ENCODE measurements at regions of chr14 and their contacts with region 1.

Region 1: DNA sequence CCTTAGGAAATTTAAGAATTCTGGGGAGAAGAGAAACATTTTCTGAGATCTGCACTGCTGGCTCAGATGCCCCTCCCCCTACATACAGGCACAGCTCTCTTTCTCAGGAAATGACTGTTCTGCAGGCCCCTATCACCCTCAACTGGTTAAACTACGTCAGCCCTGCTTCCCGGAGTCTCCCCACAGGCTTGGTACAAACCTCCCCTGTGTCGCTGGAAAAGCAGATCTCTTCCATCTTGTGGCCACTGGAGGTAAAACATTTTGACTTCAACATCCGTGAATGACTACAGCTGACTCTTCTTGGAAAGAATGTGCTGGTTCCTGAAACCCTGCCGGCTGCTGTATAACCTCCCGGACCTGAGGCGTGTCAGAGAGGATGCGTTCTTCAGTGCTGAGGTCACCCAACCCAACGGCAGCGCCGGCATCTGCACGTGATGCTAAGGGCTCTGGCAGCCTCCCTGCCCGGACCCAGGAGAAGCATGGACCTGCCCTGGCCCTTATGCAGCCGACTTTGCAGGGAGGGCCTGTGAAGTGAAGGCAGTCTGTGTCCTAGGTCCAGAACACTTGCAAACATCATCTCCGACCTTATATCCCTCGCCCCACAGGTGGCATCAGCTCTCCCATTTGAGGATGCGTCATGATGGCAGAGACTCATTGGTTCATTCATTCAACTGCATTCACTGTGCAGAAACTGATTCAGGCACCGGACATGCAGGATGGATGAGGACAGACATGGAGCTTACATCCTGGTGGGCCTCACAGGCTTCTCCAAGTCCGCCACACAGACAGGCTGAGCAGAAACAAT is 129.3 kb downstream of the GCH1 start:
- DNase-seq: peak; percentile 67 to 83
- H3K4me3 ChIP-seq: no peak overlapping the region
- H3K27ac ChIP-seq: no peak overlapping the region
- H3K4me1 ChIP-seq: peaks cover 0 to 11% (median 2%) of the 10 kb centered on the region in 4 experiments; a peak in 4 of 7 replicates
- H3K27me3 ChIP-seq: no peaks in the 10 kb centered on the region
- CTCF ChIP-seq: peak; percentile 40 to 74 (median 70)
- EP300 ChIP-seq: peak in 1 of 2 experiments; percentile 10; a peak in 1 of 3 replicates
- POLR2A ChIP-seq: no peak
- RAD21 ChIP-seq: peak; percentile 71 to 75

Region 2: DNA sequence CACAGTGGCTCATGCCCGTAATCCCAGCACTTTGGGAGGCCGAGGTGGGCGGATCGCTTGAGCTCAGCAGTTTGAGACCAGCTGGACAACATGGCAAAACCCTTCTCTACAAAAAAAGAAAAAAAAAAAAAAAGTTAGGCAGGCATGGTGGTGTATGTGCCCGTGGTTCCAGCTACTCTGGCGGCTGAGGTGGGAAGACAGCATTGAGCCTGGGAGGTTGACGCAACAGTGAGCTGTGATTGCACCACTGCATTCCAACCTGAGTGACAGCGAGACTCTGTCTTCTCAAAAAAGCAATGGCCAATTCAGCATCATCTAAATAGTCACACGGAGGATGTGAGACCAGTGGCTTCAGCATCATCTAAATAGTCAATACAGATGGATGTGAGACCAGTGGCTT is 216.8 kb before region 1 on chr14:
- CTCF ChIA-PET with region 1: interaction called, 98 read pairs
- POLR2A ChIA-PET with region 1: no interaction called
- DNase-seq: no peak
- H3K4me3 ChIP-seq: no peak overlapping the region
- H3K27ac ChIP-seq: no peak overlapping the region
- H3K4me1 ChIP-seq: peaks cover 0 to 2% (median 0%) of the 10 kb centered on the region in 4 experiments; a peak in 1 of 7 replicates
- H3K27me3 ChIP-seq: no peaks in the 10 kb centered on the region
- CTCF ChIP-seq: no peak
- EP300 ChIP-seq: no peak
- POLR2A ChIP-seq: no peak
- RAD21 ChIP-seq: no peak

Region 3: GRCh38 chr14:54577977-54578376 is 195.4 kb before region 1 on chr14:
- CTCF ChIA-PET with region 1: interaction called, 35 read pairs
- POLR2A ChIA-PET with region 1: interaction called, 3 read pairs
- DNase-seq: no peak
- H3K4me3 ChIP-seq: no peak overlapping the region
- H3K27ac ChIP-seq: no peak overlapping the region
- H3K4me1 ChIP-seq: no peaks in the 10 kb centered on the region
- H3K27me3 ChIP-seq: no peaks in the 10 kb centered on the region
- CTCF ChIP-seq: no peak
- EP300 ChIP-seq: no peak
- POLR2A ChIP-seq: no peak
- RAD21 ChIP-seq: no peak

Region 4: DNA sequence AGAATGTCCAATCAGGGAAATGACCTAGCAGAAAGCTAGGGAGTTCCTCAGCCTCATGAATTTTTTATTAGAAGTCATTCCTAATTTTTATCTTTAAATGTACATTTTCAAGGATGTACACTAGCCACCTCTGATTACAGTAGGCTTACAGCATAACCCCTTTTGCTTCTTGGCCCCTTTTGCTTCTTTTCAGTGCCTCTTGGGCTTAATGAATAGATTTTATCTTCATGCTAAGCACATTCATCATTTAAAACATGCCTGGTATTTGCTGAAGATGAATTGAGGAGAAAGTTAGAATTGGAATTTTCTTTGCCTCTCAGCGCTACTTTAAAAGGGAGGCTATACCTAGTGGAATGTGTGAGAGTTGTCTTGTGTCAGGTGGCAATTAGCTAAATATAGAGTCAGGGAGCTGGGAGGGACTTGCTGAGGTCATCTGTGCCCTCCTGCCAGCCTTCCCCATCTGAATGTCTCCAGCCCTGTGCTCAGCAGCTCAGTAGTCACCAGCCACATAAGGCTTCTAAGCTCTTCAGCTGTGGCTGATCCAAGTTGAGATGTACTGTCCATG is 74.3 kb before region 1 on chr14:
- CTCF ChIA-PET with region 1: interaction called, 31 read pairs
- POLR2A ChIA-PET with region 1: interaction called, 3 read pairs
- DNase-seq: no peak
- H3K4me3 ChIP-seq: no peak overlapping the region
- H3K27ac ChIP-seq: no peak overlapping the region; the same call in 1 of the 2 replicates
- H3K4me1 ChIP-seq: peaks cover 0 to 2% (median 0%) of the 10 kb centered on the region in 4 experiments; a peak in 1 of 7 replicates
- H3K27me3 ChIP-seq: no peaks in the 10 kb centered on the region
- CTCF ChIP-seq: no peak
- EP300 ChIP-seq: no peak
- POLR2A ChIP-seq: no peak
- RAD21 ChIP-seq: no peak

Region 5: DNA sequence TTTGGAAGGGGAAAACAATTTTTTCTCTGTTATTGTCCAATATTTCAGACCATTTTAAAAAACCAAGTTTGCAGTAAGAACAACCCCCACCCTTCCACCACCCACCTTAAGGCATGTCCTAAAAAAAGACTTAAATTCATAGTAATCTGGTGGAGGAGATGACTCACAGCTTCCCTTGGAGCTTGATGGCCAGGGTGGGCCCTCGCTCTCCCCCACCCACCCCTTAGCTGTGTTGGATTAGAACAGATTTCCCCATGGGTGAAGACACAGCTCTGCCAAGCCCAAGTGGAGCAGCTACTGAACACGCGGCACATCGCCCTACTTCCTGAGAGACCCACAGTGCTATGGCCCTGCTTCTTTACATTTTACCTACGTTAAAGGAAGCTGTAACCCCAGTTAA is 11.1 kb before region 1 on chr14:
- CTCF ChIA-PET with region 1: interaction called, 26 read pairs
- POLR2A ChIA-PET with region 1: interaction called, 4 read pairs
- DNase-seq: no peak
- H3K4me3 ChIP-seq: no peak overlapping the region
- H3K27ac ChIP-seq: no peak overlapping the region
- H3K4me1 ChIP-seq: no peaks in the 10 kb centered on the region
- H3K27me3 ChIP-seq: no peaks in the 10 kb centered on the region
- CTCF ChIP-seq: no peak
- EP300 ChIP-seq: no peak
- POLR2A ChIP-seq: no peak
- RAD21 ChIP-seq: no peak

Region 6: GRCh38 chr14:54818201-54819133 is 45.1 kb after region 1 on chr14:
- CTCF ChIA-PET with region 1: interaction called, 15 read pairs
- POLR2A ChIA-PET with region 1: no interaction called
- DNase-seq: no peak
- H3K4me3 ChIP-seq: no peak overlapping the region
- H3K27ac ChIP-seq: no peak overlapping the region
- H3K4me1 ChIP-seq: no peaks in the 10 kb centered on the region
- H3K27me3 ChIP-seq: no peaks in the 10 kb centered on the region
- CTCF ChIP-seq: no peak
- EP300 ChIP-seq: no peak
- POLR2A ChIP-seq: no peak
- RAD21 ChIP-seq: no peak

Region 7: DNA sequence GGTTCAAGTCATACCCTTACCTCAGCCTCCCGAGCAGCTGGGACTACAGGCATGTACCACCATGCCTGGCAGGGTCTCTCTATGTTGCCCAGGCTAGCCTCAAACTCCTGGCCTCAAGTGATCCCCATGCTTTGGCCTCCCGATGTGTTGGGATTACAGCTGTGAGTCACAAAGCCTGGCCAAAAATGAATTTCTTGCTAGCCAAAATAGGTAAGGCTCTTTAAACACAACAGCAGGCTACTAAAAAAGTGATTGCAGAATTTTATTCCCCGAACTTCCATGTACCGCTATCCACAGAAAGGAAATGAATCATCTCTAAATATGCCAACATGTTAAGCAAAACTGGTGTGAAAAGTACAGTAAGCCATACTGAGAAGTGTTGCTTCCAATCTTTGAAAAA is 202.9 kb after region 1 on chr14:
- CTCF ChIA-PET with region 1: no interaction called
- POLR2A ChIA-PET with region 1: no interaction called
- DNase-seq: no peak
- H3K4me3 ChIP-seq: no peak overlapping the region
- H3K27ac ChIP-seq: no peak overlapping the region
- H3K4me1 ChIP-seq: no peaks in the 10 kb centered on the region
- H3K27me3 ChIP-seq: no peaks in the 10 kb centered on the region
- CTCF ChIP-seq: no peak
- EP300 ChIP-seq: no peak
- POLR2A ChIP-seq: no peak
- RAD21 ChIP-seq: no peak